Left lung (tissue), 14 donors: ENCODE measurements at regions of chr17 and their contacts with region 1.

Region 1: DNA sequence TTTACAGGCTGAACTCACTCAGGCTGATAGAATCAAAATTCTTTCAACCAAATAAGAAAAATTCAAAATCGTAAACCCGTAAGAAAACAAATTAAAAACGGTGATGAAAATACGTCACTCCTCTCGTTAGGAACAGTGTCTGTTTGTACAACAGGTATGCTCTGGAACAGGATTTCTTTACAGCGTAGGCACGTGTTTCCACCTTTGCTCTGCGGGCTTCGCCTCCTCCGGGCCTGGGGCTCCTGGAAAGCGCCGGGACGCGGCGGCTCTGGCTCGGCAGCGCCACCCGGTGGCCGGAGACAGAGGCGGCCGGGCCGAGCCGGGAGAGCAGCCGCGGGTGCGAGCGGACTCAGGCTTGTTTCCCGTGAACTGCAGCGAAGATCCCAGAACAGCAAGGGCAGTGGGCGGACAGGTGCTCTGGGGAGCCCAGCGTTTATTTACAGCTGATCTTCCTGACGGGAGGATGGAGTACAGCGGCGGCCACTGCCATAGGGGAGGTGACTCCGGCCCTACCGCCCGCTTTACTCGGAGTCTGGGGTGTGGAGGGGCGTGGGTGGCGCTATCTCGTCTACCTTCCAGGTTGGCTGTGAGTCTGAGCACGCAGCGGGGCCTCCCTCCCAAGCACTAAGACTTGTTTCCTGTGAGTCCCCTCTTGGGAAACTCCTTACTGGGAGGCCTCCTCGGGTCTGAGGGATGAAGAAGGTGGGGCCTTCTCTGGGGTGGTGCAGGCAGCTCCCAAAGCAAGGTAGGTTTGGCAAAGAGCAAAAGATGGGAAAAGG is 40.5 kb upstream of the ATP2A3 start:
- DNase-seq: peak in 2 of 4 donors; percentile 55 to 94
- ATAC-seq: peak; percentile 57
- H3K4me3 ChIP-seq: no peak overlapping the region
- H3K27ac ChIP-seq: no peak overlapping the region
- H3K4me1 ChIP-seq: peaks cover 10 to 28% of the 10 kb centered on the region in 2 donors
- H3K27me3 ChIP-seq: no peaks in the 10 kb centered on the region
- CTCF ChIP-seq: peak; percentile 82 to 96

Region 2: DNA sequence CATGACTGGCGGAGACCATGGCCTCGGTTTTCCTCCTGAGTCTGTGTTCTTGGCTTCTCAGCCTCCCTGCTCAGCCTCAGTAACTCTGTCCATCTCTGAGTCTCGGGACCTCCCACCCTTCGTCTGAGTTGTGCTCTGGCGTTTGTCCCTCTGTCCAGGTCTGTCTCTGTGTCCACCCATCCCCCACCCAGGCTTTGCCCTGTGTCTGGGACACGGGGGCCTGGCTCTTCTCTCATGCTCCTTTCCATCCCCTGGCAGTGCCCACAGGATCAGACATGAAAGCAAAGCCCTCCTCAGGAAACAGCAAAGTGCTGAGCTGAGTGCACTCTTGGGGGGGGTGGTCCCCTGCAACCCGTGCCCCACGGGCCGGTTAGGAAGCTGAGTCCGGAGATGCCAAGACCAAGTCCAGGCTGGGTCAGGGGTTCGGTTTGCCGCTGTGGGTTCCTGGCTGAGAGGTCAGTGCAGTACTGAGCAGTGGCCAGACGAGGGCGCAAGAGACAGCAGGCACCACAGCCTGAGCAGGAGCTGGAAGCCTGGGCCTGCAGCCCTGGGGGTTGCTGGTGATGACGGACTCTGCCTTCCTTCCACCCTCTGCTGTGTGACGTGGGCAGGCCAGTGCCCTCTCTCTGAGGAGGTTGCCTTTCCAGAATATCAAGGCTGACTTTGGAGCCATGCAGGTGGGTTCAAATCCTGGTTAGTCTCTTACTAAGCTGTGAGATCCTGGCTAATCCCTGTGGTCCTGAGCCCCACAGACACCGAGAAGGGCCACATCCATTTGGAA is 91.0 kb before region 1 on chr17:
- intact Hi-C with region 1: loop called in 1 of 2 experiments (anchors 10 kb)
- DNase-seq: peak; percentile 57 to 96 (median 81)
- ATAC-seq: peak; percentile 87
- H3K4me3 ChIP-seq: peak overlapping the region in 1 of 2 donors; percentile 37
- H3K27ac ChIP-seq: peak overlapping the region in 1 of 2 donors; percentile 91
- H3K4me1 ChIP-seq: peaks cover 9 to 62% of the 10 kb centered on the region in 2 donors
- H3K27me3 ChIP-seq: no peaks in the 10 kb centered on the region
- CTCF ChIP-seq: peak; percentile 97

Region 3: GRCh38 chr17:3935140-3935542 is 69.6 kb before region 1 on chr17:
- intact Hi-C with region 1: loop called in 1 of 2 experiments (anchors 10 kb)
- DNase-seq: peak; percentile 59 to 89 (median 81)
- ATAC-seq: peak; percentile 99
- H3K4me3 ChIP-seq: no peak overlapping the region
- H3K27ac ChIP-seq: no peak overlapping the region
- H3K4me1 ChIP-seq: no peaks in the 10 kb centered on the region
- H3K27me3 ChIP-seq: no peaks in the 10 kb centered on the region
- CTCF ChIP-seq: peak; percentile 56 to 66

Region 4: DNA sequence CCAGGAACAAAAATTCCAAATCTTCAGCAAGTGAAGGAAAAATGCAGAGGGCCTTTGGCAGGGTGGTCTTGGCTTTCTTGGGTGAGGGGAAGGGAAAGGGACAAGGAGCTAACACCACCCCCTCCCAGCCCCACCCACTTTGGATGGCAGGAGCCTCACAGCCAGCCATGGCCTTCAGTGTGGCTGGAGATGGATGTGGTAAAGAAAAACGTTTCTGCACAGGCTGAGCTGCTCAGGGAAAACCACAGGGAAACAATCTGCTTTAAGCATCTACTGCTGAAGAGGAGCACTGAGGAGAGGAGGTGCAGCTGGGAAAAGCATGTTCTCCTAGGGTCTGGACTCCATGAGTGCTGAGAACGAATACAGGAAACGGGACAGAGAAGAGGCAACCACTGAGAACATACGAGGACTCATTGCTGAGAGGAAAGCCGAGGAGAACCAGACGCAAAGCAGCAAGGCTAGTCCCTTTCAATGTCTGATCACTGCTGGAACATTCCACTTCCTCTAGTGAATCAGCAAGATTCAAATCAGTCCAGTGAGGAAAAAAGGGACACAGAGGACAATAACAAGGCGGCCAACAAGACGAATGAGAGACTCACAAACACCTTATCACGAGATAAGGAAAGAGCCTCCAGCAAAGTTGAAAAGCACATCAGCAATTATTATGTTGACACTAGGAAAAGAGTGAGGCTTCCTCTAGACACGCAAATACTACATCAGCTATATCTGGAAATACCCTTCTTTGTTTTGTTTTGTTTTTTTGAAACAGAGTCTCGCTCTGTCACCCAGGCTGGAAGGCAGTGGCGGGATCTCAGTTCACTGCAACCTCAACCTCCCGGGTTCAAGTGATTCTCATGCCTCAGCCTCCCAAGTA is 96.4 kb after region 1 on chr17:
- intact Hi-C with region 1: no loop called
- DNase-seq: no peak
- ATAC-seq: peak; percentile 63
- H3K4me3 ChIP-seq: no peak overlapping the region
- H3K27ac ChIP-seq: peak overlapping the region; percentile 78 to 79
- H3K4me1 ChIP-seq: peaks cover 0 to 28% of the 10 kb centered on the region in 2 donors
- H3K27me3 ChIP-seq: no peaks in the 10 kb centered on the region
- CTCF ChIP-seq: no peak